ENCODE measurements at regions of chr1 and their contacts with region 1.

Region 1: DNA sequence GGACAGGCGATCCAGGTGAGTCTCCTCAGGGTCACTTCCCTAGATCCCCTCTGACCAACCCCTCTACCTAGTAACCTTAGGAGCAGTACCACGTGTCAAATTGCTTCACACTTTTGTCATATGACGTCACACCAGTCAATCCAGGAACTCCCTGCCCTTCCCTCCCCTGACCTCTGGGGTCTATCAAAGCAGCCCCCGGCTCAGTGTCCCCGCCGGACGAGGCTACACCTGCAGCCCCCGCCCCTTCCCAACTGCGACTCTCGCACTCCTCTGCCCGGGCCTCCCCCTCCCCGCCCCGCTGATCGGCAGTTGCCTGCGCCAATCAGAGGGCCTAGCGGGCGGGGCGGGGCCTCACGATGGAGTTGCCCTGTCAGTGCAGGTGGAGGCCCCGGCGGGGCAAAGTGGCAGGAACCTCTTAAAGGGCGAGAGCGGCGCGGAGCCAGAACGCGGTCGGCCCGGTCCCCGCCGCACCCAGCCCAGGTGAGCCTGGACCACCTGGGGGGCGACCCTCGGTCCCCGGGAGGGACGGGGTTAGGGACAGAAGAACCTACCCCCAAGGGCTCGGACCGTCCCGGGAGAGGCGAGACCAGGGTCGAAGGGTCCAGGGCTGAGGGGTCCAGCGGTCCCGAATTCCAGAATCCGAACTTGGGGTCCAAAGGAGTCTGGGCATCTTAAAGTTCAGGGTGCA is 27.5 kb upstream of the EPB41 start:
- DNase-seq: no peak
- H3K4me3 ChIP-seq: peak overlapping the region; percentile 87
- CTCF ChIP-seq: no peak

Region 2: DNA sequence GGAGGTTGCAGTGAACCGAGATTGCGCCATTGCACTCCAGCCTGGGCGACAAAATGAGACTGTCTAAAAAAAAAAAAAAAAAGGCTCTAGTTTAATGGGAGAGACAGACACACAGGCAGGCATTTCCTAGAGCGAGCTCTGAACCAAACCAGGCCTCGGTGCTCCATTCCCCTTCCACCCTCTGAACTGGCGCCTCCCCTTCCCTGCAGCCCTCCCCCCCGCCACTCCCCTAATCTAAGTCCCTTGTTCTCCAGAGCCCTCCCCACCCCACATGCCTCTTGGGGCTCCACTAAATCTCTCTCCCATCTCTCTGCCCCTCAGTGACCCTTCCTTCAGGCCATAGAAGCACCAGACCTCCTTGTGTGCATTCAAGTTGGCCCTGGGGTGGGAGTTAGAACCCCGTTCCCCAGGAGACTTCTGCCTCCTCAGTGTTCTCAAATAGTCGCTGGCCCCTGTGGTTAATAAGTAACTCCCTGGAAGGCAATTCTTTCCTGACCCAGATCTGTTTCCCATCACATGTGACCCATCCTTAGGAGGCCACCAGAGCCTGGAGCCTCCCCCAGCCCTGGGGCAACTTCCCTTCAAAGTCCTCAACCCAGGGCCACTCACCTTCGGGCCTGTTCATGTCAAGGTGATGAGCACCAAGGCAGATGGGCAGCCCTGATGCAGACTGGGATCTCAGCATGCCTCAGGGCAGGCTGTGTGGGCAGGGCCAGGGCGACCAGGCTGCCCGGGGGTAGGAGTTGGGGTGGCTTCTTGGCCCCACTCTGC is 15.1 kb before region 1 on chr1:
- CTCF ChIA-PET with region 1: interaction called, 12 read pairs
- POLR2A ChIA-PET with region 1: no interaction called
- DNase-seq: no peak
- H3K4me3 ChIP-seq: no peak overlapping the region
- CTCF ChIP-seq: no peak

Region 3: GRCh38 chr1:28902738-28903137 is 15.9 kb after region 1 on chr1:
- CTCF ChIA-PET with region 1: interaction called, 11 read pairs
- POLR2A ChIA-PET with region 1: no interaction called
- DNase-seq: no peak
- H3K4me3 ChIP-seq: no peak overlapping the region
- CTCF ChIP-seq: no peak

Region 4: GRCh38 chr1:29043274-29043965 is 156.5 kb after region 1 on chr1:
- CTCF ChIA-PET with region 1: interaction called, 1,100 read pairs
- POLR2A ChIA-PET with region 1: no interaction called
- DNase-seq: no peak
- H3K4me3 ChIP-seq: no peak overlapping the region
- CTCF ChIP-seq: no peak